Activated B cell treated with CpG ODN at 0.5 μM for 24 hours (primary cell): ENCODE measurements at regions of chr15 and their contacts with region 1.

Region 1: GRCh38 chr15:64067564-64068030 is 21.3 kb upstream of the DAPK2 start:
- DNase-seq: peak; percentile 54
- ATAC-seq: peak; percentile 91
- H3K4me3 Mint-ChIP-seq: no peak overlapping the region
- H3K27ac Mint-ChIP-seq: peak overlapping the region; percentile 20
- H3K4me1 Mint-ChIP-seq: peaks cover 27% of the 10 kb centered on the region
- H3K27me3 Mint-ChIP-seq: no peaks in the 10 kb centered on the region
- CTCF ChIP-seq: no peak

Region 2: GRCh38 chr15:63466378-63467192 is 601.0 kb before region 1 on chr15:
- CTCF ChIA-PET with region 1: interaction called, 7 read pairs
- POLR2A ChIA-PET with region 1: no interaction called
- intact Hi-C with region 1: loop called (anchors 1 kb)
- DNase-seq: no peak
- ATAC-seq: peak; percentile 93
- H3K4me3 Mint-ChIP-seq: no peak overlapping the region
- H3K27ac Mint-ChIP-seq: no peak overlapping the region
- H3K4me1 Mint-ChIP-seq: peaks cover 29% of the 10 kb centered on the region
- H3K27me3 Mint-ChIP-seq: no peaks in the 10 kb centered on the region
- CTCF ChIP-seq: peak; percentile 56

Region 3: GRCh38 chr15:63487076-63487757 is 580.4 kb before region 1 on chr15:
- CTCF ChIA-PET with region 1: no interaction called
- POLR2A ChIA-PET with region 1: no interaction called
- intact Hi-C with region 1: no loop called
- DNase-seq: peak; percentile 80
- ATAC-seq: peak; percentile 69
- H3K4me3 Mint-ChIP-seq: peak overlapping the region; percentile 75
- H3K27ac Mint-ChIP-seq: peak overlapping the region; percentile 83
- H3K4me1 Mint-ChIP-seq: peaks cover 83% of the 10 kb centered on the region
- H3K27me3 Mint-ChIP-seq: no peaks in the 10 kb centered on the region
- CTCF ChIP-seq: no peak

Region 4: DNA sequence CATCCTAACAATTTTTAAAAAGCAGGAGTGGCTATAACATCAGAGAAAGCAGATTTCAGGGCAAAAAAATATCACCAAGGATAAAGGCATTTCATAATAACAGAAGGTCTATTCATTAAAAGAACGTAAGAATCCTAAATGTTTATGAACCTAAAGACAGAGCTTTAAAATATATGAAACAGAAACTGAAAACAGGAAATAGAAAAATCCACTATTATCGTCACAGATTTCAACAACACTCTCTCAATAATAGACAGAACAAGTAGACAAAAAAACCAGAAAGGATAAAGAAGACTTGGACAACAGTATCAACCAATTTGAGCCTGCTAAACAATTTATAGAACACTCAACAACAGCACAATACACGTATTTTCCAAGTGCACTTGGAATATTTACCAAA is 399.0 kb before region 1 on chr15:
- CTCF ChIA-PET with region 1: no interaction called
- POLR2A ChIA-PET with region 1: no interaction called
- intact Hi-C with region 1: loop called (anchors 5 kb)
- DNase-seq: no peak
- ATAC-seq: peak; percentile 69
- H3K4me3 Mint-ChIP-seq: peak overlapping the region; percentile 66
- H3K27ac Mint-ChIP-seq: peak overlapping the region; percentile 81
- H3K4me1 Mint-ChIP-seq: peaks cover 24% of the 10 kb centered on the region
- H3K27me3 Mint-ChIP-seq: no peaks in the 10 kb centered on the region
- CTCF ChIP-seq: no peak

Region 5: DNA sequence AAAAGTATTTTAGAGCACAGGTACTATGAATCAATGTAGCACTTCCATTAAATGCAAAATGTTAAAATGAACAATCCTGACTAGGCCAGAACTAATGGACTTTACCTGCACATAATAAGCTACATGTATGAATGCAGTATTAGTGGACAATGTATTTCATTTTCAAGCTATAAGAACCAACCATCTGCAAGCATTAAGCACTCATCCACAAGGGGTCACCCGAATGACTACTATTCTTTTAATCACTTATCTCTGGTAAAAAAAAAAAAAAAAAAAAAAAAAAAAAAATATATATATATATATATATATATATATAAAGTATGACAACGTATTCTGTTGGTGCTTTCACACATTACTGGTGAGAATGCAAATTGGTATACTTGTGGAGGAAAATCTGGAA is 241.1 kb before region 1 on chr15:
- CTCF ChIA-PET with region 1: interaction called, 16 read pairs
- POLR2A ChIA-PET with region 1: no interaction called
- intact Hi-C with region 1: loop called (anchors 1 kb)
- DNase-seq: no peak
- ATAC-seq: peak; percentile 49
- H3K4me3 Mint-ChIP-seq: no peak overlapping the region
- H3K27ac Mint-ChIP-seq: no peak overlapping the region
- H3K4me1 Mint-ChIP-seq: peaks cover 63% of the 10 kb centered on the region
- H3K27me3 Mint-ChIP-seq: no peaks in the 10 kb centered on the region
- CTCF ChIP-seq: no peak

Region 6: GRCh38 chr15:63945007-63945788 is 122.4 kb before region 1 on chr15:
- CTCF ChIA-PET with region 1: interaction called, 37 read pairs
- POLR2A ChIA-PET with region 1: no interaction called
- intact Hi-C with region 1: loop called (anchors 1 kb)
- DNase-seq: peak; percentile 52
- ATAC-seq: peak; percentile 89
- H3K4me3 Mint-ChIP-seq: no peak overlapping the region
- H3K27ac Mint-ChIP-seq: no peak overlapping the region
- H3K4me1 Mint-ChIP-seq: peaks cover 31% of the 10 kb centered on the region
- H3K27me3 Mint-ChIP-seq: no peaks in the 10 kb centered on the region
- CTCF ChIP-seq: peak; percentile 70

Region 7: GRCh38 chr15:64010719-64011118 is 56.9 kb before region 1 on chr15:
- CTCF ChIA-PET with region 1: interaction called, 17 read pairs
- POLR2A ChIA-PET with region 1: no interaction called
- intact Hi-C with region 1: no loop called
- DNase-seq: peak; percentile 61
- ATAC-seq: peak; percentile 97
- H3K4me3 Mint-ChIP-seq: peak overlapping the region; percentile 69
- H3K27ac Mint-ChIP-seq: peak overlapping the region; percentile 89
- H3K4me1 Mint-ChIP-seq: peaks cover 32% of the 10 kb centered on the region
- H3K27me3 Mint-ChIP-seq: no peaks in the 10 kb centered on the region
- CTCF ChIP-seq: no peak

Region 8: GRCh38 chr15:64024172-64025050 is 43.2 kb before region 1 on chr15:
- CTCF ChIA-PET with region 1: no interaction called
- POLR2A ChIA-PET with region 1: no interaction called
- intact Hi-C with region 1: no loop called
- DNase-seq: no peak
- ATAC-seq: no peak
- H3K4me3 Mint-ChIP-seq: no peak overlapping the region
- H3K27ac Mint-ChIP-seq: no peak overlapping the region
- H3K4me1 Mint-ChIP-seq: peaks cover 10% of the 10 kb centered on the region
- H3K27me3 Mint-ChIP-seq: no peaks in the 10 kb centered on the region
- CTCF ChIP-seq: no peak

Region 9: DNA sequence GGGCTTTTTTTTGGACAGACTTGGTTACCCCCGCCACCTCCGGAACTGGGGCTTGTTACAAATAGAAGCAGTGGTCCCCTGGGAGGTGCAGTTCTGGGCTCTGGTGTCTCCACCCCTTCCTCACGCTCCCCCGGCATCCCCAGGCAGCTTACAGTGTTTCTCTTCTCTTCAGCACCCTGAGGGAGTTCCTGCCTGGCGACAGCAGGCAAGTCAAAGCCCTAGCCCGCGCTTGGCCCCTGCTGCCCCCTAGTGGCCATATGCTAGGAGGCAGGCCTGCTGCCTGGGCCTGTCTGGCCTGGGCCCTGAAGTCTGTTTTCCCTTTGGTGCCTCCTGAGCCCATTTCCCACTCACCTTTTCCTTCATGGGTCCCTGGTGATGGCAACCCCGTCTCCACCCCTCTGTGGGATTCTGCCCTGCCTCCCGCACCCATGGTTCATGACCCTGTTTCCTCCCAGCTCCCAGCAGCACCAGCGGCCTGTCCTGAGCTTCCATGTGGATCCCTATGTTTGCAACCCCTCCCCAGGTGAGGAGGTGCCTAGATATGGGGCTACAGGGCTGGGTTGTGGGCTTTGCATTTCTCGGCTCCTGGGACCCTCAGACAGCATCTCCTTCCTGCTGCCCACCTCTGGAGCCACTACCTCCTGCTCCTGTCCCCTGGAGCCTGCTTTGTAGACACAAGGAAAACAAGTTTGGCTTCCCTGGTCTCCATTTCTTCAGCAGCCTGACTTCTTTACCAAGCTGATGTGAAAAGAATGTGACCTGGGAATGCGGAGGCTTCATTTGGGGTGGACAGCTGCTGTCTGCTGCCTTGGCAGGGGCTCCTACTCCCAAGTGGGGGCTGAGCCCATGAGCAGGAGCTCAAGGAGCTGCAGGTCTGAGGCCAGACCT is 86.1 kb after region 1 on chr15:
- CTCF ChIA-PET with region 1: interaction called, 21 read pairs
- POLR2A ChIA-PET with region 1: interaction called, 4 read pairs
- intact Hi-C with region 1: loop called (anchors 1 kb)
- DNase-seq: peak; percentile 92
- ATAC-seq: peak; percentile 80
- H3K4me3 Mint-ChIP-seq: peak overlapping the region; percentile 86
- H3K27ac Mint-ChIP-seq: peak overlapping the region; percentile 91
- H3K4me1 Mint-ChIP-seq: peaks cover 69% of the 10 kb centered on the region
- H3K27me3 Mint-ChIP-seq: no peaks in the 10 kb centered on the region
- CTCF ChIP-seq: peak; percentile 61